Left ventricle myocardium superior (tissue), 1 donor: ENCODE measurements at regions of chr2 and their contacts with region 1.

Region 1: DNA sequence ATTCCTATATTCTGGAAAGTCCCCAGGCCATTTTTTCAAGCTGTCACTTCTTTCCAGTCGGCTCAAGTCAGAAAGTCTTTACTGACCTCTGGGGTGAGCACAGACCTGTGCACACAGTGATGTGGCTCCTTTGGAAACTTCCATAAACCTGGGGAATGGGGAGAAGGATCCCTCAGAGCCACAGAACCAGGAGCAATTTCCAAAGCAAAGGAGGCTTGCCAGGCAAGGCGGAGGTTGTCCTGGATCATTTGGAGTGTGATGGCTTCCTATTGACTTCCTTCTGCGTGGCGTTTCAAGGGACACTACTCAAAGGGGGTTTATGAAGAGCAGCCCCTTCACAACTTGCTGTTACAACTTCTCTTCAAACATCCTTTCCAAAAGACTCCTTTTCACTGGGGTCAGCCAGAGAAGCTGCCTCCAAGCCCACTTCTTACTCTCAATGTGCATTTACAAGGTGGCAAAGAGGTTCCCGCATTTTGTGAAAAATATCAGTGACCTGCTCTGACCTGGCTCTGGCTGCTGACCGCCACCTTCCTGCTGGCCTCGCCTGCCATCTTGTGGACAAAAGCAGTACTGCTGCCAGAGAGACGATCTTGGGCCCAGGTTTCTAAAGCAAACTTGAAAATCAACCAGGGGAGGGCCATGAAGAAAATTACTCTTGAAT is 18.2 kb upstream of the TMEM247 start:
- DNase-seq: peak; percentile 84
- ATAC-seq: peak; percentile 73

Region 2: DNA sequence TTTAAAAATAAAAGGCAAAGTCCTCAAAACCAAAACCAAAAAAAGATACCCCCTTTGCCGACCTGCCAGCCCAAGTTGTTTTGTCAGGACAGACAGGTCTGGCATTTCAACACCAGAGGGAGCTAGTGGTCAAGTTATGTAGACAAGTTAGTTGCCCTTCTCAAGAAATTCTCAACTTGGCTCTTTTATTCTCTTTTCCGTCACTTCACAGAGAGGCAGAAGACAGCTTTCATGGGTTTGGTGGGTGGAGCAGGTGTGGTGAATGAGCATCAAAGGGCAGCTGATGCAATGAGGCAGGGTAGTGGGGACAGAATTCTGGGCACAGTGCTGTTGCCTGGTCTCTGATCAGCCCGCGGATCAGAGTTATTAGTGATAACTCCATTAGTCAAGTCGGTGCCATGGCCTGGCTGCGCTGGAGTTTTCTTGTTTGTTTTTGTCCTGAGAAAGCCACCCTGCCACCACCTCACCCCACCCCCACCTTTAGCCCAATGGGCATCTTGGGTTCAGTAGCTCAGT is 467.6 kb before region 1 on chr2:
- intact Hi-C with region 1: loop called (anchors 2 kb)
- DNase-seq: no peak
- ATAC-seq: peak; percentile 64